Esophagus muscularis mucosa (tissue), 4 donors: ENCODE measurements at regions of chr19 and their contacts with region 1.

Region 1: GRCh38 chr19:1605236-1606137 is at the start of gene UQCR11:
- DNase-seq: peak; percentile 99
- H3K4me3 ChIP-seq: peak within 1 kb of the TSS; percentile 80 to 100 (median 95)
- H3K27ac ChIP-seq: peak within 1 kb of the TSS; percentile 92 to 95 (median 94)
- H3K4me1 ChIP-seq: peaks cover 30 to 64% (median 44%) of the 10 kb centered on the region in 4 donors
- H3K27me3 ChIP-seq: no peaks in the 10 kb centered on the region
- CTCF ChIP-seq: peak; percentile 55 to 69 (median 64)
- EP300 ChIP-seq: no peak
- POLR2A ChIP-seq: no peak
- total RNA-seq, gene UQCR11: 111 to 152 (median 132) TPM

Region 2: DNA sequence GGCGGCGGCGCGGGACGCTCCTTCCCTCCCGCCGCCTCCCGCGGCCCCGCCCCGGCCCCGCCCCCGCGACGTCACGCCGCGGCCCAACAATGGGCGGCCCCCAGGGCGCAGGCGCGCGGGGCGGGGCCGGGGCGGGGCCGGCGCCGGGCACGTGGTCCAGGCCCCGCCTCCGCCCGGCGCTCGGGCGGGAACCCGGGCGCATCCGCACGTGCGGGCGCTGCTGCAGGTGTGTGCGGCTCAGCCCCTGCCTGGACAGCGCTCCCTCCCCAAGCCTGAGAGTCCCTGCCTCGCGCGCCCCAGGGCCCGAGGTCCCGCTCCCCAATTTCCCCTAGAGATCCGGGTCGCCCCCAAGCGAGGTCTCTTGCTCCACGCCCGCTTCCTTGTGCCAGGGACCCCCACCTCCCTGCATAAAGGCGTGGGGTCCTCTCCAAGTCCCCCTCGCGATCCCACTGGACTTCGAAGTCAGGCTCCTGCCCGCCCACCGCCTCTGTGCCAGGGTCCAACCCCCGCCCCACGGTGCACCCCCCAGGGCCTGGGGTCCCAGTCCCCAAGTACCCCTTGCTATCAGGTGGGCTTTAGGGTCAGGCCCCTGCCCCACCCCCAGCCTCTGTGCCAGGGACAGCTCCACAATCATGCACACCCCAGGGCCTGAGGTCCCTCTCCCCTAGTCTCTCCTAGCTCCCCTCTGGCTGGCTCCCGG is 37.0 kb before region 1 on chr19 and contains the start of gene MEX3D:
- intact Hi-C with region 1: loop called (anchors 5 kb)
- DNase-seq: no peak
- H3K4me3 ChIP-seq: peak within 1 kb of the TSS; percentile 76 to 86 (median 78)
- H3K27ac ChIP-seq: peak within 1 kb of the TSS; percentile 87 to 91 (median 90)
- H3K4me1 ChIP-seq: peaks cover 12 to 38% (median 27%) of the 10 kb centered on the region in 4 donors
- H3K27me3 ChIP-seq: no peaks in the 10 kb centered on the region
- CTCF ChIP-seq: no peak
- EP300 ChIP-seq: no peak
- POLR2A ChIP-seq: no peak
- total RNA-seq, gene MEX3D: 21.6 to 64.4 (median 47.5) TPM

Region 3: DNA sequence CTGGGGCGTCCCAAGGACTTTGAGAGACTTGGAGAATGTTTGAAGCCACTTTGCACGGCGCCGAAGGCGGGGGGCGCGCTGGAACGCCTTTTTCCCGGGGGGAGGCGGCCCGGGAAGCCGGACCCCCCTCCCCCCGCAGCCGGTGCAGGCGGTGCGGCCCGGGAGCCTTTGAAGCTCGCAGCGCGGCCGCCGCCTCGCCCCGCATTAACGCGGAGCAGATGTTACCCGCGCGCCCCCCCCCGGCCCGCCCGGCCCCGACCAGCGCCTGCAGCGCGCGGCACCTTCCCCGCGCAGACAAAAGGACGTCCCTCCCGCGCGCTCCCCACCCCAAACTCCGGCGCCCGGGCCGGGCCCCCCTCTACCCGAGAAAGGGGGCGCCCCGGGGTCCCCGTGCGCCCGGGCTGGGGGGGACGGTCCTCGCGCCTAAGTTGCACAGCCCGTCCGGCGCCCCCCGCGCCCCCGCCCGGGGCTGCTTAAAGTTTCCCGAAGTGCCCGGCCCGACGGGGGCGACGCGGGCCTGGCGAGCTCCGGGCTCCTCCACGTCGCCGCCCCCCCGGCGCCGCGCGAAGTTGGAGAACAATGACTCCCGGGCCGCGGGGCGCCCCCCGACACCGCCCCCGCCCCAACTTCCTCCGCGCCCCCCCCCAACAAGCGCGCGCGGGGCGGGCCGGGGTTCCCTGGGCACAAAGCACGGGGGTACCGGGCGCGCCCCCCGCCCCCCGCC is 46.2 kb after region 1 on chr19:
- intact Hi-C with region 1: loop called (anchors 2 kb)
- DNase-seq: no peak
- H3K4me3 ChIP-seq: peak overlapping the region; percentile 78 to 98 (median 92)
- H3K27ac ChIP-seq: peak overlapping the region; percentile 68 to 81 (median 78)
- H3K4me1 ChIP-seq: peaks cover 10 to 30% (median 25%) of the 10 kb centered on the region in 4 donors
- H3K27me3 ChIP-seq: peaks cover 0 to 8% (median 0%) of the 10 kb centered on the region in 4 donors
- CTCF ChIP-seq: peak in 1 of 3 experiments; percentile 24
- EP300 ChIP-seq: no peak
- POLR2A ChIP-seq: no peak